ENCODE measurements at regions of chr7 and their contacts with region 1.

Region 1: DNA sequence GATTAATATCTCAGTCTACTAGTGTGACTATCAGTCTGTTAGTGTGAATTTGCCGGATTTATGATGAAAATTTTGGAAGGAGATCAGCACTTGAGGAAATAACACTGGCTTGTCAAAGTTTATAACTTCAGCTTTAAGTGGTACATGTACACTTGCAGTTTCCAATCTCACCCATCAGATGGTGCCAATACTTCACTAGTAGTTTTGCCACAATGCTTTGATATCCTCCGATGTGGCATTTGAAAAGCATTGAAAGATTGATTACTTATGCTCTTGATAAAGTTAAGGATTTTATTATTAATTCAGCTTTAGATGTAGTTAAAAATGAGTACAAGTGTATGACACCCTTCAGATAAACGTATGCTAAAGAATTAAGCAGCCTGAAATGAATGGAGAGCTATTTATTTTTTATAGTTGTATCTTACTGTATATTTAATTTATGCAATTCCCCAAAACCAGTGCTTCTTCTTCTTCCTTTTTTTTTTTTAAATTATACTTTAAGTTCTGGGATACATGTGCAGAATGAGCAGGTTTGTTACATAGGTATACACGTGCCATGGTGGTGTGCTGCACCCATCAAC is 98.2 kb downstream of the ANLN start:
- DNase-seq: peak in 7 of 9 donors; percentile 47 to 72 (median 61)
- ATAC-seq: peak; percentile 78
- H3K4me3 ChIP-seq: no peak overlapping the region
- H3K4me3 Mint-ChIP-seq: no peak overlapping the region
- H3K27ac ChIP-seq: no peak overlapping the region
- H3K27ac Mint-ChIP-seq: peak overlapping the region in 1 of 9 donors; percentile 81
- H3K4me1 ChIP-seq: no peaks in the 10 kb centered on the region
- H3K4me1 Mint-ChIP-seq: peaks cover 0 to 9% (median 3%) of the 10 kb centered on the region in 7 donors
- H3K27me3 ChIP-seq: no peaks in the 10 kb centered on the region
- H3K27me3 Mint-ChIP-seq: peaks cover 0 to 22% (median 0%) of the 10 kb centered on the region in 5 donors

Region 2: GRCh38 chr7:36366718-36367560 is 120.9 kb before region 1 on chr7:
- CTCF ChIA-PET with region 1: interaction called, 3 read pairs
- POLR2A ChIA-PET with region 1: no interaction called
- intact Hi-C with region 1: loop called in 1 of 2 experiments (anchors 2 kb)
- DNase-seq: peak; percentile 84 to 92 (median 91)
- ATAC-seq: peak; percentile 98
- H3K4me3 ChIP-seq: peak overlapping the region; percentile 76
- H3K4me3 Mint-ChIP-seq: peak overlapping the region; percentile 80 to 97 (median 93)
- H3K27ac ChIP-seq: peak overlapping the region; percentile 70
- H3K27ac Mint-ChIP-seq: peak overlapping the region in 8 of 9 donors; percentile 51 to 94 (median 82)
- H3K4me1 ChIP-seq: peaks cover 0 to 5% of the 10 kb centered on the region in 2 donors
- H3K4me1 Mint-ChIP-seq: peaks cover 0 to 8% (median 5%) of the 10 kb centered on the region in 7 donors
- H3K27me3 ChIP-seq: no peaks in the 10 kb centered on the region
- H3K27me3 Mint-ChIP-seq: peaks cover 0 to 57% (median 0%) of the 10 kb centered on the region in 5 donors

Region 3: DNA sequence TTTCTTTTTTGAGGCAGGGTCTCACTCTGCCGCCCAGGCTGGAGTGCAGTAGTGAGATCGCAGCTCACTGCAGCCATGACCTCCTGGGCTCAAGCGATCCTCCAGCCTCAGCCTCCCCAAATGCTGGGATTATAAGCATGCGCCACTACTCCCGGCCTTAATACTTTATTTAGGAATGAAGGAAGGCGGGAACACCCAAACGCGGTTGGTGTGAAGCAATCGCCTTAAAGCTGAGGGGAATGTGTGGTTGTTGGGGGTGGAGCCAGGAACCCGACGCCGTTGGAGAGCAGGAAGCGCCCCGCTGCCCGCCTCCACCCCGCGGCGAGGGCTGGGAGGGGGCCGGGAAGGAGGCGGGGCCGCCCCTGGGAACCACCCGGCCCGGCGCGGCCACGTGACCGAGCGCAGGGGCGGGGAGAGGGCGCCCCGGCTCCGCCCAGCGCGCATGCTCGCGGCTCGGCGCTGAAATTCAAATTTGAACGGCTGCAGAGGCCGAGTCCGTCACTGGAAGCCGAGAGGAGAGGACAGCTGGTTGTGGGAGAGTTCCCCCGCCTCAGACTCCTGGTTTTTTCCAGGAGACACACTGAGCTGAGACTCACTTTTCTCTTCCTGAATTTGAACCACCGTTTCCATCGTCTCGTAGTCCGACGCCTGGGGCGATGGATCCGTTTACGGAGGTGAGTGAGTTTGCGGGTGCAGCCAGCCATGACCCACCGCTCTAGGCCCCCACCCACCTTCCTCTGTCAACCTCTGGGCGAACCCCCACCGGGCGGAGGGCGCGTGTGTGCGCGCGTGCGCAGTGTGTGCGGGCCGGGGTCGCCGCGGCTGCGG is 98.3 kb before region 1 on chr7 and contains the start of gene ANLN:
- CTCF ChIA-PET with region 1: no interaction called
- POLR2A ChIA-PET with region 1: no interaction called
- intact Hi-C with region 1: no loop called
- DNase-seq: peak; percentile 71 to 91 (median 82)
- ATAC-seq: peak; percentile 98
- H3K4me3 ChIP-seq: peak within 1 kb of the TSS; percentile 78
- H3K4me3 Mint-ChIP-seq: peak within 1 kb of the TSS; percentile 77 to 90 (median 85)
- H3K27ac ChIP-seq: peak within 1 kb of the TSS; percentile 67
- H3K27ac Mint-ChIP-seq: peak within 1 kb of the TSS; percentile 72 to 90 (median 81)
- H3K4me1 ChIP-seq: peaks cover 8 to 19% of the 10 kb centered on the region in 2 donors
- H3K4me1 Mint-ChIP-seq: peaks cover 12 to 39% (median 26%) of the 10 kb centered on the region in 7 donors
- H3K27me3 ChIP-seq: no peaks in the 10 kb centered on the region
- H3K27me3 Mint-ChIP-seq: peaks cover 0 to 12% (median 0%) of the 10 kb centered on the region in 5 donors
- total RNA-seq, gene ANLN: 0.35 to 48.6 (median 0.82) TPM

Region 4: GRCh38 chr7:36670585-36671431 is 183.0 kb after region 1 on chr7:
- CTCF ChIA-PET with region 1: interaction called, 113 read pairs
- POLR2A ChIA-PET with region 1: interaction called, 10 read pairs
- intact Hi-C with region 1: loop called (anchors 1 kb)
- DNase-seq: peak; percentile 37 to 80 (median 74)
- ATAC-seq: peak; percentile 98
- H3K4me3 ChIP-seq: no peak overlapping the region
- H3K4me3 Mint-ChIP-seq: peak overlapping the region in 7 of 10 donors; percentile 13 to 84 (median 54)
- H3K27ac ChIP-seq: no peak overlapping the region
- H3K27ac Mint-ChIP-seq: peak overlapping the region in 7 of 9 donors; percentile 19 to 92 (median 64)
- H3K4me1 ChIP-seq: peaks cover 0 to 7% of the 10 kb centered on the region in 2 donors
- H3K4me1 Mint-ChIP-seq: peaks cover 17 to 44% (median 37%) of the 10 kb centered on the region in 7 donors
- H3K27me3 ChIP-seq: no peaks in the 10 kb centered on the region
- H3K27me3 Mint-ChIP-seq: no peaks in the 10 kb centered on the region

Region 5: GRCh38 chr7:36777062-36777461 is 289.2 kb after region 1 on chr7:
- CTCF ChIA-PET with region 1: no interaction called
- POLR2A ChIA-PET with region 1: no interaction called
- intact Hi-C with region 1: loop called in 1 of 2 experiments (anchors 5 kb)
- DNase-seq: peak; percentile 11 to 90 (median 85)
- ATAC-seq: peak; percentile 78
- H3K4me3 ChIP-seq: peak overlapping the region; percentile 41
- H3K4me3 Mint-ChIP-seq: peak overlapping the region; percentile 76 to 92 (median 84)
- H3K27ac ChIP-seq: peak overlapping the region; percentile 75
- H3K27ac Mint-ChIP-seq: peak overlapping the region; percentile 78 to 99 (median 95)
- H3K4me1 ChIP-seq: peaks cover 68 to 69% of the 10 kb centered on the region in 2 donors
- H3K4me1 Mint-ChIP-seq: peaks cover 65 to 90% (median 85%) of the 10 kb centered on the region in 7 donors
- H3K27me3 ChIP-seq: no peaks in the 10 kb centered on the region
- H3K27me3 Mint-ChIP-seq: no peaks in the 10 kb centered on the region

Region 6: DNA sequence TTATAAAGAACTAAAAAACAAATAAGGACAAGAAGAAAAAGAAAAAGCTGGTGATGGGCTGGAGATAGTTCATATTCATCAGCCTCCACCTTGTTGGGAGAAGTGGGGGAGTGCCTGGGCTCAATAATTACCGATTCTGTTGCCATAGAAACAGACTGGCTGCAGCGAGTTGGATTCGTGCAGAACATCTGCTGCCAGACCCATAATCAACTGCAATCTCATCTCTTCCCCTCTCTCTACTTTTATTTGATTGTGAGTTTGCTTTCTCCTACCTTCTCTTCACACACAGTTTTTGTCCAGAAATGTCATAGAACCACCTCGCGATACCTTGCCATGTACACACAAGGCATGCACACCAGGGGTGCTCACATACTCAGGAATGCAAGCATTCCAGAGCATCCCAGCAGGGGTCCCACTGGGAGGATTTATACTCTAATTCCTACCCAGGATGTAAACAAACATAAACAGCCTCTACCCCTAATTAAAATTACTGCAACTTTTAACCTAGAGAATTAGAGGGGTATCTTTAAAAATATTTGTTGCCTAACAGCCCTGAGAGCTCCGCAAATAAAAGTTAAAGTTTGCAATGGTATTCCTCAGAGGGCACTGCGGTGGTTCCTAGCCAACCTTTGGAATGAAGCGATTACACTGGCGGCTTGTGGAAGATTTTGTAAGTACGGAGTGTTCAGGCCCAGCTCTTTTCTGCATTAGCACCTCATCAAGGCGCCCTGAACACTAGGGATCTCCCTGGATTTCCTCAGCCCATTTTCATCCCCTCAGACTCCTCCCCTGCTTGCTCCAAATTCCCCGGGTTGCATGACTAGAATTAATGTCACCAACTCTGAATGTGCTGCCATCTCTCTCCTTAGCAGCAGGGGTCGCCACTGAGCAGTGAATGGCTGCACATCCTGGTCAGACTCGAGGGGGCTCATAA is 498.9 kb after region 1 on chr7:
- CTCF ChIA-PET with region 1: interaction called, 4 read pairs
- POLR2A ChIA-PET with region 1: no interaction called
- intact Hi-C with region 1: loop called in 1 of 2 experiments (anchors 5 kb)
- DNase-seq: peak in 8 of 9 donors; percentile 10 to 64 (median 44)
- ATAC-seq: peak; percentile 80
- H3K4me3 ChIP-seq: no peak overlapping the region
- H3K4me3 Mint-ChIP-seq: peak overlapping the region in 2 of 10 donors; percentile 29 to 51
- H3K27ac ChIP-seq: no peak overlapping the region
- H3K27ac Mint-ChIP-seq: peak overlapping the region in 3 of 9 donors; percentile 10 to 51 (median 19)
- H3K4me1 ChIP-seq: no peaks in the 10 kb centered on the region
- H3K4me1 Mint-ChIP-seq: peaks cover 24 to 69% (median 47%) of the 10 kb centered on the region in 7 donors
- H3K27me3 ChIP-seq: no peaks in the 10 kb centered on the region
- H3K27me3 Mint-ChIP-seq: no peaks in the 10 kb centered on the region

Region 7: GRCh38 chr7:37833107-37833817 is 1345.4 kb after region 1 on chr7:
- CTCF ChIA-PET with region 1: no interaction called
- POLR2A ChIA-PET with region 1: no interaction called
- intact Hi-C with region 1: loop called in 1 of 2 experiments (anchors 2 kb)
- DNase-seq: peak in 8 of 9 donors; percentile 15 to 57 (median 38)
- ATAC-seq: peak; percentile 76
- H3K4me3 ChIP-seq: peak overlapping the region; percentile 61
- H3K4me3 Mint-ChIP-seq: peak overlapping the region; percentile 74 to 95 (median 90)
- H3K27ac ChIP-seq: no peak overlapping the region
- H3K27ac Mint-ChIP-seq: peak overlapping the region in 8 of 9 donors; percentile 7 to 76 (median 53)
- H3K4me1 ChIP-seq: peaks cover 0 to 5% of the 10 kb centered on the region in 2 donors
- H3K4me1 Mint-ChIP-seq: peaks cover 0 to 13% (median 10%) of the 10 kb centered on the region in 7 donors
- H3K27me3 ChIP-seq: no peaks in the 10 kb centered on the region
- H3K27me3 Mint-ChIP-seq: peaks cover 0 to 17% (median 0%) of the 10 kb centered on the region in 5 donors